Activated B cell treated with CpG ODN at 0.5 μM for 24 hours (primary cell): ENCODE measurements at regions of chr17 and their contacts with region 1.

Region 1: DNA sequence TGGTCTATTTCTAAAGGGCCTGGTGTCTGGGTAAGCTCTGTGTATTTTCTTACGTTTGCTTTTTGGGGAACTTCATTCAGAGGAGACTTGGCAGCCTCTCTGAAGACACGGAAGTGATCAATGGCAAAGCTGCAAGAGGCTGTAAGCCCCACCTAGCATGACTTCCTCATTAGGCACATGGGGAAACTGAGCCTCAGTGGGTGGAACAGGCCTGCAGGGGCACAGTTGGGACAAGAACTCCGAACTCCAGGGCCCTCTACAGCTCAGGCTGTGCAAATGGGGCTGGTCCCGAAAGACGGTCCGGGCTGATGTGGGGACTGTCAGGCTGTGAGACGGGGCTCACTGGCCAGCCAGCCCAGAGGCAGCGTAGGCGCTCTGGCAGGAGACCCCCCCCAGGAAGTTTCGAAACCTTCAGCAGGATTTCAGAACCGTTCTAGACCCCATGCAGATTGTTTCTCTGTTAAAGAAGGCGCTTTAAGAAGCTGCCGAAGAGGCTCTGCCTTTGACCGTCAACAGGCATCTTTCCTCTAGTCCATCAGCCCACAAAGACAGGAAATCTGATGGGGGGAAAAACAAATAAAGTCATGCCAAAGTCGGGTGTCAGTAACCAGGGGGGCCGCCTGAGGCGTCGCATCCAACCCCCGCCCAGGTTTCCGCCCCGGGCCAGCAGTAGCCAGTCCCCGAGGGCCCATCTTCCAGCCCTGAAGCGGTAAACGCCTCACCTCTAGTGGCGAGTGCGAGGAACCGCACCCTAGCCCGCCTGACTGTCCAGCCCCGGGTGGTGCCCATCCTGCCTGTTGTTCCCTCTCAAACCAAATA is 79.8 kb upstream of the TBC1D3K start:
- DNase-seq: peak; percentile 59
- ATAC-seq: peak; percentile 89
- H3K4me3 Mint-ChIP-seq: peak overlapping the region; percentile 79
- H3K27ac Mint-ChIP-seq: peak overlapping the region; percentile 83
- H3K4me1 Mint-ChIP-seq: peaks cover 51% of the 10 kb centered on the region
- H3K27me3 Mint-ChIP-seq: no peaks in the 10 kb centered on the region
- CTCF ChIP-seq: no peak

Region 2: GRCh38 chr17:37160944-37161343 is 683.4 kb before region 1 on chr17:
- CTCF ChIA-PET with region 1: no interaction called
- POLR2A ChIA-PET with region 1: interaction called, 11 read pairs
- intact Hi-C with region 1: no loop called
- DNase-seq: no peak
- ATAC-seq: no peak
- H3K4me3 Mint-ChIP-seq: no peak overlapping the region
- H3K27ac Mint-ChIP-seq: no peak overlapping the region
- H3K4me1 Mint-ChIP-seq: no peaks in the 10 kb centered on the region
- H3K27me3 Mint-ChIP-seq: no peaks in the 10 kb centered on the region
- CTCF ChIP-seq: no peak

Region 3: DNA sequence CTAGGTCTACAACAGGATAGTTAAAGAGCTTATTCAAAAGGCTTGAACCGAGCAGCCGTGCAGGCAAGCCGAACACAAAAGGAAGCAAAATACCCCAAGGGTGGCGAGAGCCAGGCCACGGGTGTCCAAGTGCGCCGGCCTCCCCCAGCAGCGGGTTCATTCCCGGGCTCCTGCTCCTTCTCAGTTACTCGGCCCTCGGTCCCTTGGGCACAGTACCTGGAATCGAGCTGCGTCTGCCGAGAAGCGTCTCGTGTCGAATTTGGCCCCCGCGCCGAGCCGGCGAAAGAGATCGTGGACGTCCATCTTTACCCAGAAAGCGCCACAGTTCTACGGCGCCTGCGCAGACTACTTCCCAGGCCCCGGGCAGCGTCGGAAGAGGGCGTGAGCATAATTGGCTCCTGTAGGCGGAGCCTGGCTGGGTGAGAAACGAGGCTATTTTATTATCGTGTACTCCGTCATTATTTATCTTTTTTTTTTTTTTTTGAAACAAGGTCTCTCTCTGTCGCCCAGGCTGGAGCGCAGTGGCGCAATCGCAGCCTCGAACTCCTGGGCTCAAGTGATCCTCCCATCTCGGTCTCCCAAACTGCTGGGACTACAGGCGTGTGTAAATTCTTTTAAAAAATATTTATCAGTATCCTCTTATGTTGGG is 201.1 kb before region 1 on chr17 and contains the start of gene DDX52:
- CTCF ChIA-PET with region 1: no interaction called
- POLR2A ChIA-PET with region 1: no interaction called
- intact Hi-C with region 1: loop called (anchors 1 kb)
- DNase-seq: peak; percentile 78
- ATAC-seq: peak; percentile 99
- H3K4me3 Mint-ChIP-seq: peak within 1 kb of the TSS; percentile 95
- H3K27ac Mint-ChIP-seq: peak within 1 kb of the TSS; percentile 90
- H3K4me1 Mint-ChIP-seq: peaks cover 38% of the 10 kb centered on the region
- H3K27me3 Mint-ChIP-seq: peaks cover 9% of the 10 kb centered on the region
- CTCF ChIP-seq: no peak
- total RNA-seq, gene DDX52: 35.6 and 39.9 TPM in 2 replicates

Region 4: DNA sequence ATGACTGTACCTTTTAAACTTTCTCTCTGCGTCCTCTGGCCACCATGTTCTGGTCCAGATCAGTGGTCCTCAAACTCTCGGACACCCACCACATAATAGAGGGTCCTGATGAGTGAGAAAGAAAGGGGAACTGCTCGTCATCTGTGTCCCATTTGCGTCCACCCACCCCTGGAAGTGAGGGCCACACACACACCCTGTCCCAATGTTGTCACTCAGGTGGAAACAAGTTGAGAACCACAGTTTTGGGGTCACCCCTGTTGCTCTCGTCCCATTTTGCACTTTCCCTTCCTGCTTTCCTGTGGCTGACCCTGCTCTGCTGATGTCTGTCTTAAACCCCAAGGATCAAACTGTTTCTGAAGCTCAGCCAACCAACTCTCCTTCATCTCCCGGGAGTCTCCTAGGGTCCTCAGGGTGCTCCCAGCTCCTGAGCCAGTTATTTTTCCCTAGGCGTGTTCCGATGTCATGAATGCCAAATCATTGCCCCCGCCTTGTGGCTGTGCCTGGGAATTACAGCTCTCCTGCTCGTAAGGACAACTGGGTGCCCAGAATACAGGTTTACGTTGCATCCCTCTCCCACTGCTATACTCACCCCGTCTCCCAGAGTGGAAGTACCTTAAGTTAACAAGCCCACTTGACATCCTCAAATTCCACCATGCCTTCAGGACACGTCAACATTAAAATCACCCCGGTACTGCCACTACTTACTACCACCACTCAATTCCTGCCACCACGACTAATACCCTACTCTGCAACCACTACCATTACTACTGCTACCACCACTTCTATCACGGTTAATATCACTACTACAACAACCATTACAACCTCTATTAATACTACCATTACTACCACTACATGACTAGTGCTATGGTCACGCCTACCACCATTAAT is 73.5 kb before region 1 on chr17:
- CTCF ChIA-PET with region 1: no interaction called
- POLR2A ChIA-PET with region 1: no interaction called
- intact Hi-C with region 1: loop called (anchors 1 kb)
- DNase-seq: no peak
- ATAC-seq: no peak
- H3K4me3 Mint-ChIP-seq: no peak overlapping the region
- H3K27ac Mint-ChIP-seq: no peak overlapping the region
- H3K4me1 Mint-ChIP-seq: peaks cover 71% of the 10 kb centered on the region
- H3K27me3 Mint-ChIP-seq: no peaks in the 10 kb centered on the region
- CTCF ChIP-seq: no peak

Region 5: DNA sequence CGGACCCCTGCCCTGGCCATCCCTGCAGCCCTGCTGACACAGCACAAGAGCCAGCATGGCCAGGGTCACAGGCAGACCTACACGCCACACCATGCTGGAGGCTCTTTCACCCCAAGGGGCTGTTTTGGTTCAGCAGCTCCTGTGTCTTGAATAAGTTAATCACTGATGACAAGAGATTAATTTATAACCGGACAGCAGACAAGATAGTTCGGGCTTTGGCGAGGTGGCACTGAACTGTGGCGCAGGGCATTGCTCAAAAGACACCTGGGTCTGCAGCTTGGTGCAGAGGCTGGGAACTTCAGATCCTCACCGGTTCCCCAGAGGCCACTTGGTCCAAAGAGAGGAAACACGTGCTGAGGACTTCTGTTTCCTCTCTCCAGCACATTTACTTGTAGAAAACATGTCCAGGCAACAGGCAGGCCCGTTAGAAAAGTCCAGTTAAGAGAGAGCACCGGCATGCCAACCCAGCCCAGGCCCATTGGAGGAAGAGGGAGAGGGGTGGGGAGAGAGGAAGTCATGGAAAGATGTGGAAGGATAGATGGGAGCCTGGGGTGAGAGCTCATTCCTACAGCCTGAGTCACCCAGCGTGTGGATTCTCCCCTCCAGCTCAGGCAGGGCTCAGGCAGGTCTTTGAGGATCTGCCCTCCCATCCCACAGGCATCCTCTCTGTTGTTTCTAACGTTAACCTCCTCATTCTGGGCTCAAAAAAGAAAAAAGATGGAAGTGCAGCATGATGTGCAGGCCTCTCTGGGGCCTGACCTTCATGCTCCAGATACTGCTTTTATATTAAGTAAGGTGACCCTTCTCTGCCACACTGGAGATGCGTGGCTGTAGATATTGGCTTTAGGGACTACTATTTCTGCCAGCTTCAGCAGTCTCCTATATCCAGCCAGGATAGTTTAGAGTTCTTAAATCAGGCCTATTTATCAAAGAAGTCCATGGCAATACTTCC is 19.6 kb before region 1 on chr17:
- CTCF ChIA-PET with region 1: no interaction called
- POLR2A ChIA-PET with region 1: interaction called, 9 read pairs
- intact Hi-C with region 1: loop called (anchors 2 kb)
- DNase-seq: no peak
- ATAC-seq: peak; percentile 41
- H3K4me3 Mint-ChIP-seq: no peak overlapping the region
- H3K27ac Mint-ChIP-seq: peak overlapping the region; percentile 24
- H3K4me1 Mint-ChIP-seq: peaks cover 72% of the 10 kb centered on the region
- H3K27me3 Mint-ChIP-seq: no peaks in the 10 kb centered on the region
- CTCF ChIP-seq: no peak